Heart right ventricle (tissue), 16 donors: ENCODE measurements at regions of chr1 and their contacts with region 1.

Region 1: GRCh38 chr1:71473331-71473730 is 392.5 kb upstream of the ZRANB2 start:
- DNase-seq: no peak
- ATAC-seq: no peak
- H3K4me3 ChIP-seq: no peak overlapping the region
- H3K27ac ChIP-seq: no peak overlapping the region
- H3K4me1 ChIP-seq: no peaks in the 10 kb centered on the region
- H3K27me3 ChIP-seq: no peaks in the 10 kb centered on the region
- CTCF ChIP-seq: no peak

Region 2: GRCh38 chr1:70737134-70737533 is 736.2 kb before region 1 on chr1:
- intact Hi-C with region 1: loop called in 1 of 10 experiments (anchors 5 kb)
- DNase-seq: no peak
- ATAC-seq: no peak
- H3K4me3 ChIP-seq: no peak overlapping the region
- H3K27ac ChIP-seq: no peak overlapping the region
- H3K4me1 ChIP-seq: no peaks in the 10 kb centered on the region
- H3K27me3 ChIP-seq: no peaks in the 10 kb centered on the region
- CTCF ChIP-seq: no peak